ENCODE measurements at regions of chr4 and their contacts with region 1.

Region 1: GRCh38 chr4:74133786-74134499 is 24.0 kb upstream of the MTHFD2L start:
- DNase-seq: peak; percentile 82

Region 2: GRCh38 chr4:73593631-73594241 is 540.2 kb before region 1 on chr4:
- intact Hi-C with region 1: loop called (anchors 5 kb)
- DNase-seq: no peak

Region 3: GRCh38 chr4:73662709-73663546 is 471.0 kb before region 1 on chr4:
- intact Hi-C with region 1: loop called (anchors 5 kb)
- DNase-seq: no peak

Region 4: DNA sequence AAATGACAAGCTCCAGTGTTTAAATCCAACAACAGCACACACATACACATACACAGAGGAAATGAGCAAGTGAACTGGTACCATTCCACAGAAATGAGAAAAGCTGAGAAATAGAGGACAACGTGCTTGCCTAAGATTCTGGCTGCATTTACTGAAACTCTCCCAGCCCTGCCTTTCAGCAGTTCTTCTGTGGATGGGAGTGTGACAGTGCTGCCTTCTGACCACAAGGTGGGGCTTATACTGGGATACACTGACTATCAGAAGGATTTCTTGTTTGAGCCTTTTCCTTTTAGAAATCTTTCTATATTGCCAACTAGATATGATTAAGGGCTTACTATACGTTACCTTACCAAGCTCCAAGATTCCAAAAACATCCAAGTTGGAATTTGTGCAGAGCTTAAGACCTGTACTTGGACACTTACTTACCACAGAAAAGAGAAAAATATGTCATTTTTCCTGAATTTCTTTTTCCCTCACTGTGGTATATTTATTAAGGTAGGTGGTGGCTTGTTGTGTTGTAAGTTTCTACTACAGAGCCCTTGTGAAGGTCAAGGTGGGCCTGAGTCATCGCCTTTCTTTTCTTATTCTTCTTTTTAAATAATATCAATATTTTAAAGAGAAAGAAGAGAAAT is 404.3 kb before region 1 on chr4:
- intact Hi-C with region 1: loop called (anchors 5 kb)
- DNase-seq: no peak

Region 5: DNA sequence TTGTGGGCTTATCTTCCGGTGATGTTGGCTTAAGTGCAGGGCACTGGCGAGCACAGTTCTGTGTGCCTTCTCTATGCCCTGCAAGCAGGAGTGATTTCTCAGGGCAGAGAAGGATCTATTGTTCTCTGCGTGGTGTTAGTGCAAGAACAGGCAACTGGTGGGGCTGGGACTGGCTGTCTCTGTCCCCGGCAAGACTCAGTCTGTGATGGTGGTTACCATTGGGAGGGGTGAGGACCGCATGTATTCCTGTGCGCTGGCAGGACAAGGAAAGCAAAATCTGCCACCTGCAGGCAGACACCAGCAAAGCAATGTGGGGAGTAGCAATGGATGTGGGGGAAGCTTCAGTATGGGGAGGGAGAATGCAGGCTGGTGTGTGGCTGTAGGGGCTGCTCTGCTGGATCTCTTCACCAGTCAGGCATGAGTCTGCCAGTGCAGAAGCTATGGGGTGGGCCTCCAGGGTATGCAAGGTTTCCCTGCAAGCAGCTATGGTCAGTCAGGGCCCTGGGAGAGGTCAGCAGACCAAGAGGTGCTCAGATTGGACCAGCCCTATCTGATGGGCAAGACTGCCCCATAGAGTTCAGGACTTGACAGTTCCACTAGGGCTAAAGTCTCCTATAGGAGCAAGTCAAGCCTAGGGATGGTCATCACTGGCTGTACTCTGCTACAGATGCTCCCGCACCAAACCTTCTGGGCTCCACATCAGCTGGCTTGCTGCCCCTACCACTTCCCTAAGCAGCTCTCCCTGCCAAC is 168.9 kb before region 1 on chr4:
- intact Hi-C with region 1: no loop called
- DNase-seq: no peak

Measured in cardiac septum (tissue), 1 donor.